Aorta (tissue), 5 donors: ENCODE measurements at regions of chr10 and their contacts with region 1.

Region 1: DNA sequence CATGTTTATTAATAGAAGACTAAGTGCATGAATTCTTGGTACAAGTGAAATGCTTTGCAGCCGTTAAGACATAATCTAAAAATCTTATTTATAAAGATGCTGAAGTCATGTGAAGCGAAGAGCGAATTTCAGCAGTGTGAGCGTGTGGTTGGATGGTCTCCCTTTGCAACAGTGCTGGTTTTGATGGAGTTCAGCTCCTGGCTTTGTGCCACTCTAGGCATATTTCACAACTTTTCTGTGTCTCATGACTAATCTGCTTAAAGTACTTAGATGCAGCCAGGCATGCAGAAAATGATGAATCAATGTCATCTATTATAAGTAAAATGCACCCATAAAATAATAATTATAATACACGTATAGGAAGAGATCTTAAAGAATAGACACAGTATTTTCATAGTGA is 107.2 kb upstream of the TCERG1L start:
- DNase-seq: no peak
- ATAC-seq: no peak
- H3K4me3 ChIP-seq: no peak overlapping the region
- H3K27ac ChIP-seq: no peak overlapping the region
- H3K4me1 ChIP-seq: no peaks in the 10 kb centered on the region
- H3K27me3 ChIP-seq: no peaks in the 10 kb centered on the region

Region 2: GRCh38 chr10:131320860-131321604 is 97.6 kb before region 1 on chr10:
- intact Hi-C with region 1: no loop called
- DNase-seq: no peak
- ATAC-seq: no peak
- H3K4me3 ChIP-seq: no peak overlapping the region
- H3K27ac ChIP-seq: no peak overlapping the region
- H3K4me1 ChIP-seq: no peaks in the 10 kb centered on the region
- H3K27me3 ChIP-seq: no peaks in the 10 kb centered on the region

Region 3: GRCh38 chr10:131736321-131736980 is 317.8 kb after region 1 on chr10:
- intact Hi-C with region 1: loop called in 1 of 2 experiments (anchors 5 kb)
- DNase-seq: peak in 1 of 2 donors; percentile 40
- ATAC-seq: no peak
- H3K4me3 ChIP-seq: no peak overlapping the region
- H3K27ac ChIP-seq: no peak overlapping the region
- H3K4me1 ChIP-seq: no peaks in the 10 kb centered on the region
- H3K27me3 ChIP-seq: no peaks in the 10 kb centered on the region